ENCODE measurements at regions of chr1 and their contacts with region 1.

Region 1: GRCh38 chr1:30911046-30911954 is 2.7 kb upstream of the SDC3 start:
- DNase-seq: peak; percentile 90 to 97 (median 94)
- ATAC-seq: peak; percentile 68 to 73
- H3K4me3 ChIP-seq: no peak overlapping the region
- H3K27ac ChIP-seq: no peak overlapping the region
- H3K4me1 ChIP-seq: peaks cover 5% of the 10 kb centered on the region
- H3K27me3 ChIP-seq: no peaks in the 10 kb centered on the region

Region 2: GRCh38 chr1:30718636-30719405 is 192.5 kb before region 1 on chr1:
- intact Hi-C with region 1: loop called in 2 of 4 experiments (anchors 5 to 10 kb)
- DNase-seq: peak; percentile 80 to 93 (median 90)
- ATAC-seq: peak; percentile 89
- H3K4me3 ChIP-seq: peak overlapping the region; percentile 19
- H3K27ac ChIP-seq: peak overlapping the region; percentile 96
- H3K4me1 ChIP-seq: no peaks in the 10 kb centered on the region
- H3K27me3 ChIP-seq: no peaks in the 10 kb centered on the region

Region 3: GRCh38 chr1:30732277-30732996 is 178.9 kb before region 1 on chr1:
- intact Hi-C with region 1: loop called in 2 of 4 experiments (anchors 5 to 10 kb)
- DNase-seq: peak in 1 of 3 donors; percentile 13
- ATAC-seq: no peak
- H3K4me3 ChIP-seq: no peak overlapping the region
- H3K27ac ChIP-seq: no peak overlapping the region
- H3K4me1 ChIP-seq: no peaks in the 10 kb centered on the region
- H3K27me3 ChIP-seq: no peaks in the 10 kb centered on the region

Region 4: DNA sequence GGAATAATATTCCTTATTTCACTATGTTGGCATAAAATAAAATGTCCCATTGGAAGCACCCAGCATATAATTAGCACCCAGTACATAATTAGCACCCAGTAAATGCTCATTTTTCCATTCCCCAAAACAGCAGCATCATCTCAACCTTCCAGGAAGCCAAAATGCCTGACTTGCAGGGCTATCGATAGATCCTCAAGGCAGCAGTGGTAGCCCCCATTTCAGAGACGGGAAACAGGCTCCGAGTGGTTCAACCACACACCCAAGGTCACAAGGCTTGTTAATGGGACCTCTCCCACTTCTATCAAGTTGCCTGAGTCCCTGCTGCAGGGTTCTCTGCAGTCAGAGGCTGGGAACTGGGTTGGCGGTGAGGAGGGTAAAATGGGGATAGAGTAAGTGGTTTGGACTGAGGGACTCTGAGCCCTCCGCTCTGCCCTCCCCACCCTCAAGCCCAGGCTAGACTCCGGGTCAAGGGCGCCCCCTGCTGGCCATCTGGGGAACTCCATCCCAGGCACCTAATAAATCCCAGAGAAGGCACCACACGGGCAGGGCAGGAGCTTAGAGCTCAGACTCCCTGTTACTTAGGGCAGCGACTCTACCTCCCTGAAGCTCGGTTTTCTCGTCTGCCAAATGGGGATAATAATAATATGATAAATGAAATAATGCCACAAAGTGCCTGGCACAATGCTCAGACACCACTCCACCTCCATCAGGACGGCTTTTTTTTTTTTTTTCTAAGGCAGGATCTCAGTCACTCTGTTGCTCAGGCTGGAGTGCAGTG is 131.8 kb before region 1 on chr1:
- intact Hi-C with region 1: loop called in 3 of 4 experiments (anchors 1 to 5 kb)
- DNase-seq: peak; percentile 80 to 94 (median 93)
- ATAC-seq: peak; percentile 67 to 75
- H3K4me3 ChIP-seq: no peak overlapping the region
- H3K27ac ChIP-seq: no peak overlapping the region
- H3K4me1 ChIP-seq: no peaks in the 10 kb centered on the region
- H3K27me3 ChIP-seq: no peaks in the 10 kb centered on the region

Region 5: DNA sequence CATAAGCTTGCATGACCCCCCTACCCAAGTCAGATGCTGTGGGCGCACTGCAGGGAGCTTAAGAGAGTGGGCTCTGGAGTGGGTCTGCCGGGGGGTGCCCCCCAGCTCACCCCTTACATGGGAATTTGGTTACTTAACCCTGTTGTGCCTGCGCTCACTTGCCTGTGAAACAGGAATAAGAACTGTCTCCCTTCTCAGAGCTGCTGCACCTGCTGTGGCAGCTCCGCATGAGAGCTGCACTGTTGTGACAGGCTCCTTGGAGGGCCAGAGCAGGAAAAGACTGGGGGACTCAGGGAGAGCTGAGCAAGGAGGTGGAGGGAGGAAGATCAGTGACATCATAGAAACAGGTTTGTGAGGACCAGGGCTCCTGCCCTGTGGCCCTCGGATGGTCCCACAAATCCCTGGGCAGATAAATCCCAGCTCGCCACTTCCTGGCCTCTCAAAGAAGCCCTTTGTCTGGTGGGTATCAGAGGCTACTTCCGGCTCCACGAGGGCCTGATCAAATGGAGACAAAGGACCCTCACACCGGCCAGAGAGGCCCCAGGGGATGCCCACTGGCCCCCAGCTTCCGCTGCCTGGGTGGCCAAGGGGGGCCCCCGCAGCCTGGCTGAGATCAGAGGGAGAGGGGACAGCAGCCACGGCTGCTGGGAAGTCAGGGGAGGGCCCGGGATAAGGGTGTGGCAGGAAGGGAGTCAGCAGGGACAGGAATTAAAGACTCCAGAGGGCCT is 124.9 kb before region 1 on chr1:
- intact Hi-C with region 1: loop called (anchors 1 to 5 kb)
- DNase-seq: peak; percentile 65 to 77 (median 69)
- ATAC-seq: peak; percentile 47 to 83
- H3K4me3 ChIP-seq: no peak overlapping the region
- H3K27ac ChIP-seq: peak overlapping the region; percentile 53
- H3K4me1 ChIP-seq: peaks cover 3% of the 10 kb centered on the region
- H3K27me3 ChIP-seq: no peaks in the 10 kb centered on the region

Region 6: GRCh38 chr1:30801771-30802198 is 109.5 kb before region 1 on chr1:
- intact Hi-C with region 1: loop called (anchors 2 to 5 kb)
- DNase-seq: peak; percentile 81 to 94 (median 93)
- ATAC-seq: peak; percentile 44 to 54
- H3K4me3 ChIP-seq: no peak overlapping the region
- H3K27ac ChIP-seq: no peak overlapping the region
- H3K4me1 ChIP-seq: peaks cover 7% of the 10 kb centered on the region
- H3K27me3 ChIP-seq: no peaks in the 10 kb centered on the region